Calu3 (cell line): ENCODE measurements at regions of chr15 and their contacts with region 1.

Region 1: GRCh38 chr15:63402498-63403253 is 21.0 kb upstream of the CA12 start:
- DNase-seq: peak; percentile 32
- H3K4me3 Mint-ChIP-seq: no peak overlapping the region
- H3K27ac Mint-ChIP-seq: no peak overlapping the region
- H3K4me1 Mint-ChIP-seq: peaks cover 28% of the 10 kb centered on the region
- H3K27me3 Mint-ChIP-seq: no peaks in the 10 kb centered on the region
- CTCF ChIP-seq: no peak

Region 2: GRCh38 chr15:63122002-63122893 is 280.4 kb before region 1 on chr15:
- CTCF ChIA-PET with region 1: no interaction called
- intact Hi-C with region 1: no loop called
- DNase-seq: peak; percentile 78
- H3K4me3 Mint-ChIP-seq: peak overlapping the region; percentile 70
- H3K27ac Mint-ChIP-seq: no peak overlapping the region
- H3K4me1 Mint-ChIP-seq: peaks cover 24% of the 10 kb centered on the region
- H3K27me3 Mint-ChIP-seq: no peaks in the 10 kb centered on the region
- CTCF ChIP-seq: no peak

Region 3: GRCh38 chr15:63166219-63166618 is 236.5 kb before region 1 on chr15:
- CTCF ChIA-PET with region 1: interaction called, 7 read pairs
- intact Hi-C with region 1: loop called (anchors 2 kb)
- DNase-seq: peak; percentile 31
- H3K4me3 Mint-ChIP-seq: no peak overlapping the region
- H3K27ac Mint-ChIP-seq: no peak overlapping the region
- H3K4me1 Mint-ChIP-seq: peaks cover 8% of the 10 kb centered on the region
- H3K27me3 Mint-ChIP-seq: no peaks in the 10 kb centered on the region
- CTCF ChIP-seq: no peak

Region 4: GRCh38 chr15:63212050-63213004 is 190.3 kb before region 1 on chr15:
- CTCF ChIA-PET with region 1: no interaction called
- intact Hi-C with region 1: no loop called
- DNase-seq: no peak
- H3K4me3 Mint-ChIP-seq: peak overlapping the region; percentile 25
- H3K27ac Mint-ChIP-seq: peak overlapping the region; percentile 40
- H3K4me1 Mint-ChIP-seq: peaks cover 32% of the 10 kb centered on the region
- H3K27me3 Mint-ChIP-seq: no peaks in the 10 kb centered on the region
- CTCF ChIP-seq: no peak

Region 5: DNA sequence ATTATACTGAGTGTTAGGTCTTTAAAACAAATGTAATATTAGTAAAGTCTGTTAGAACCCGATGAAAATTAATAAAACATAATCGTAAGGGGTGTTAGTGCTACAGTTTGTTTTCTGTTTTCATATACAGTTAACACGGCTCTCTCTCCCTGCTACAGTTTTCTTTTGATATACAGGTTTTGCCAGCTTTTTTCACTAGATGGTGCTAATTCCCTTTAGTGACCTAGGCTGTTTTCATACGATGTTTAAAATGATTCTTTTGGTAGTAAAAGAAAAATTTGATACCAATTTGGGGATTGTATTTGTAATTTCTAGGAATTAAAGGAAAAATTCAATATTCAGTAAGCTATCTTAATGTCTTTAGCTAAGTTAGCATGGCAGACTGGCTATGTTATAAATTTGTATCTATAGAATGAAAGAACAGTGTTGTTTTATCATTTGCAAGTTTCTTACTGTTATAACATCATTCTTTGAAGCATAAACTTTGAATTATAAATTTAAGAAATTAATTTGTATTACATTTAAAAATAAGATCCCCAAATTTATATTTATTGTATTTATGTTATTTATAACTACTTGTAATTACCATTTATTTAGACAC is 113.8 kb before region 1 on chr15:
- CTCF ChIA-PET with region 1: interaction called, 37 read pairs
- intact Hi-C with region 1: loop called (anchors 1 kb)
- DNase-seq: peak; percentile 30
- H3K4me3 Mint-ChIP-seq: no peak overlapping the region
- H3K27ac Mint-ChIP-seq: no peak overlapping the region
- H3K4me1 Mint-ChIP-seq: peaks cover 9% of the 10 kb centered on the region
- H3K27me3 Mint-ChIP-seq: no peaks in the 10 kb centered on the region
- CTCF ChIP-seq: peak; percentile 55

Region 6: GRCh38 chr15:63461230-63461985 is 58.7 kb after region 1 on chr15:
- CTCF ChIA-PET with region 1: interaction called, 7 read pairs
- intact Hi-C with region 1: loop called (anchors 2 kb)
- DNase-seq: peak; percentile 72
- H3K4me3 Mint-ChIP-seq: peak overlapping the region; percentile 81
- H3K27ac Mint-ChIP-seq: peak overlapping the region; percentile 98
- H3K4me1 Mint-ChIP-seq: peaks cover 61% of the 10 kb centered on the region
- H3K27me3 Mint-ChIP-seq: no peaks in the 10 kb centered on the region
- CTCF ChIP-seq: peak; percentile 19